OCI-LY7 (cell line): ENCODE measurements at regions of chr11 and their contacts with region 1.

Region 1: DNA sequence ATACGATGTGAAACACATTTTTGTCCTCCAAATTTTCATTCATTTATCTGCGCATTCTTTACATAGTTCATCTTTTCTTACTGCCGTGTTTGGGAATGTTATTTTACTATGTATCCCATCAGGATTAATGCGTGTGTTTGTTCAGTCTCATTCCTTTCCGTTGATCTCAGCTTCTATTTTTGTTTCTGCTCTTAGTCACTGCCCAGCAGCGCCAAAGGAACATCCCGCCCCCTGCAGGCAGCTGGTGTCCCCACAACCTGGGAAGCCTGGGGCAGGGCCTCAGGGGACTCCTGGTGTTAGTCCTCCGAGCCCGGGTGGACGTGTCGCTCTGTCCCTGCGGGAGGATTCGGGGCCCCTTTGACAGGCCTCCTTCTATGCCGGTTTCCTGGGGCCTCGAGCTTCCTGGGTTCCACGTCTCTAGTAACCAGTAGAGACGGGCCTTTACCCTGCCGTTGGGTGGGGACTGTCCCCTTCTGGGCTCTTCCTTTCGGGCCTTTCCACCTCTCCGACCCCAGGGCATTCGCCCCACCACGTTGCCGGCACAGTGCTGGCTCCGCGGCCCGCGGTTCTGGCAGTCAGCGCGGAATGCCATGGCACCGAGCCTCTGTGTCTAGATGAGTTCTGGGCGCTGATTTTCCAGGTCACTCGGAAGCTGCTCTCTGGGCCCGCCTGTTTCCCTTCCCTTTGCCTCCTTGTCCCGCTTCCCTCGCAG is 39.8 kb downstream of the WEE1 start:
- DNase-seq: peak; percentile 92
- H3K4me3 ChIP-seq: peak overlapping the region; percentile 72
- H3K27ac ChIP-seq: peak overlapping the region; percentile 99
- H3K4me1 ChIP-seq: peaks cover 96% of the 10 kb centered on the region
- CTCF ChIP-seq: peak; percentile 99

Region 2: GRCh38 chr11:9384535-9385303 is 228.6 kb before region 1 on chr11 and contains the start of gene IPO7:
- CTCF ChIA-PET with region 1: no interaction called
- POLR2A ChIA-PET with region 1: no interaction called
- intact Hi-C with region 1: loop called (anchors 10 kb)
- DNase-seq: peak; percentile 94
- H3K4me3 ChIP-seq: peak within 1 kb of the TSS; percentile 97
- H3K27ac ChIP-seq: peak within 1 kb of the TSS; percentile 64
- H3K4me1 ChIP-seq: peaks cover 27% of the 10 kb centered on the region
- CTCF ChIP-seq: peak; percentile 49
- total RNA-seq, gene IPO7: 88.3 and 120 TPM in 2 replicates

Region 3: DNA sequence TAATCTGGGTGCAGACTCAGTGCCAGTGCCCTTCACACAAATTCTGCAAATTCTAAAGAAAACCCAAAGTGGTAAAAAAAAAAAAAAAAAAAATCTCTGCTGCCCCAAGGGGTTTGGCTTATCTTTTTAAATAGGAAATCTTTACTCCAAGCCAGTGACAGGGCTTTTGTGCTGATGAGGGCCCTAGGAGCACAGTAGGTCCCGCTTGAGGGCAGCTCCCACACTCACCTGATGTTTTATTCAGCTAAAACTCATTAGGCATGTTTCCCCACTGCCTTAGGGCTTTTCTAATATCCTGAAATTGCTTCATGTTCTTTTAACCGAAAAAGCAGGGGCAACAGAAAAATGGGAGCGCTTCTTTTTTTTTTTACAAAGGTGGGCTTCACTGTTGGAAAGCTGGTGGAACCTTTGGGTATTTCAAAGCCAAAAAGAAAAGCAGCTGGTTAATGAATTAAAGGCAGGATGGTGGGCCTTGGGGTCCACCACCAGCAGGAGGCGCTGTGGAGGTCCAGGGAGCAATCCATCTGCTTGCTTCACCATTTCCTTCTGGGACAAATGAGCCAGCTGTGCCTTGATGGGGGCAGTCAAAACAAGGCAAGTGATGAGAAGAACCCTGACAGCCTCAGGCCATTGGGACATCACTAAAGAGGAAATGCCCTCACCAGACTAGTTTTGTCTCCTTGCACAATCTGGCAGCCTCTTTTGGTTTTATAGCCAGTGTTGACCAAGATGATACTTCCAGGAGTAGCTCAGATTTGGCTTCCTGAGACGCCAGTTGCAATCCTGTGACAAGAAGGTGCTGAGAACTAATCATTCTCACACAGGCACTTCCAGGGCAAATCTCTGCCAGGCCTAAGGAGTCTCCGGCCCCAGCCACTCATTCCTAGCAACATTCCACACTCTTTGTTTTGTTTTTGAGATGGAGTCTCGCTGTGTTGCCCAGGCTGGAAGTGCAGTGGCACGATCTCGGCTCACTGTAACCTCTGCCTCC is 78.2 kb before region 1 on chr11:
- CTCF ChIA-PET with region 1: no interaction called
- POLR2A ChIA-PET with region 1: interaction called, 13 read pairs
- intact Hi-C with region 1: loop called (anchors 1 kb)
- DNase-seq: peak; percentile 81
- H3K4me3 ChIP-seq: no peak overlapping the region
- H3K27ac ChIP-seq: no peak overlapping the region
- H3K4me1 ChIP-seq: peaks cover 12% of the 10 kb centered on the region
- CTCF ChIP-seq: peak; percentile 100

Region 4: DNA sequence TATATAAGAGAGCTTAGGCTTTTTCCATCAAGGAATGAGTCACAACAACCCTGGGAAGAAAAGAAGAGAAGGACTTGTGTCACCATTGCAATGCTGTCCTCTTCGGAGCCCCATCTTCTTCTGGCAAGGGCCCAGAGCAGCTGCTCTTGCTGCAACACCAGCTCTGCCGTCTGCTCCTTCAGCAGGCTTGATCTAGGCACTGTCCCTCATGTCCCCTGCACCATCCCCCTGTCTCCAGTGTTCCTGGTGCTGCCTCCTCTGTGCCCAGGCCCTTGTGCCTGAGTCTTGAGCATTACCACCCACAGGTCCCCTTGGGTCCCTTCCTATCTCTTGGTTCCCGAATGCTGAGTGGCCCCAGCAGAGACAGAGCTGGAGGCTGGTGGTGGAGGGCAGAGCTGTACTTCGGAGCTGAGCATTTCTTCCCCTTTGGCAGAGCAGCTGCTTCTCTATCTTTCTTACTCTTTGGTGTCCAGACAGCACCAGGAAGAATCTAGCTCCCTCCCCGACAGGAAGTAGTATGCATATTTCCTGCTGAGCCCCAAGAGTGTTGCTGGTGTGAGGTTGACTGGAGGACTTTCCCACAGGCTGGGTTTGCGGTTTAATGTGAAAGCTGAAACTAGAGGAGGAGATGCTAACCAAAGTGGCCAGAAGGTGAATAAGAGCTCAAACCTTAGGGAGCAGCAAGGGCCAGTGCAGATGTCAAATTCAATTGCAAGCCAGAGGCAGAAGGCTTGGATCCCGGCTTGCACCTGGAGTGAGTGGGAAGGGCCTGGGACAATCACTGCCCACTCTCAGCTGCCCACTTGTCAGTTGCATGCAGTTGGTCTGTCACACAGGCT is 12.0 kb before region 1 on chr11:
- CTCF ChIA-PET with region 1: interaction called, 14 read pairs
- POLR2A ChIA-PET with region 1: interaction called, 239 read pairs
- intact Hi-C with region 1: loop called (anchors 1 kb)
- DNase-seq: peak; percentile 95
- H3K4me3 ChIP-seq: peak overlapping the region; percentile 74
- H3K27ac ChIP-seq: peak overlapping the region; percentile 99
- H3K4me1 ChIP-seq: peaks cover 96% of the 10 kb centered on the region
- CTCF ChIP-seq: no peak

Region 5: GRCh38 chr11:9688716-9689511 is 75.6 kb after region 1 on chr11:
- CTCF ChIA-PET with region 1: interaction called, 3 read pairs
- POLR2A ChIA-PET with region 1: interaction called, 27 read pairs
- intact Hi-C with region 1: loop called (anchors 1 kb)
- DNase-seq: peak; percentile 87
- H3K4me3 ChIP-seq: peak overlapping the region; percentile 51
- H3K27ac ChIP-seq: peak overlapping the region; percentile 96
- H3K4me1 ChIP-seq: peaks cover 99% of the 10 kb centered on the region
- CTCF ChIP-seq: no peak

Region 6: DNA sequence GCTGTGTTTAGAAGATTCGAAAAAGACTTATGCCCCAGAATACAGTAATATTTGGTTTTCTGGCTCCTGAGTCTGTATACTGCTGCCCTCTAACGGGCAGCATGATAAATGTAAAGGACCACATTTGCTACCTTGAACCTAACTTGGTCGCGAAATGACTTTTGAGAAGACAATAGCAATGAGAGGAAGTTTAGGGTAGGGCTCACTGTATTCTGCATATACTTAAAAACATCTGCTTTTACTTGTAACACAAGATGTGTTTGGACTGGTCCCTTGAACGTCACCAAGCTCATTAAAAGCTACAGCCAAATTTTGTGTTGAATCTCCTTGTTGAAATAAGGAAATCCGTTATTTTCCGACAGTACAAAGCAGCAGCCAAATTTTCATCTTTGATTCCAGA is 359.7 kb after region 1 on chr11:
- CTCF ChIA-PET with region 1: no interaction called
- POLR2A ChIA-PET with region 1: interaction called, 3 read pairs
- intact Hi-C with region 1: loop called (anchors 1 kb)
- DNase-seq: peak; percentile 73
- H3K4me3 ChIP-seq: no peak overlapping the region
- H3K27ac ChIP-seq: no peak overlapping the region
- H3K4me1 ChIP-seq: no peaks in the 10 kb centered on the region
- CTCF ChIP-seq: peak; percentile 92